Activated naive CD4-positive, alpha-beta T cell treated with anti-CD3 and anti-CD28 coated beads, Interleukin-2, amount 10 ng/mL, durations not matched to agents 7 days and 5 days (primary cell): ENCODE measurements at regions of chr16 and their contacts with region 1.

Region 1: GRCh38 chr16:84687715-84688114 is 12.1 kb upstream of the USP10 start:
- DNase-seq: no peak
- H3K4me3 Mint-ChIP-seq: no peak overlapping the region
- H3K27ac Mint-ChIP-seq: no peak overlapping the region
- H3K4me1 Mint-ChIP-seq: peaks cover 12% of the 10 kb centered on the region
- H3K27me3 Mint-ChIP-seq: peaks cover 68% of the 10 kb centered on the region

Region 2: GRCh38 chr16:84555418-84556195 is 132.1 kb before region 1 on chr16:
- CTCF ChIA-PET with region 1: no interaction called
- DNase-seq: peak; percentile 33
- H3K4me3 Mint-ChIP-seq: no peak overlapping the region
- H3K27ac Mint-ChIP-seq: peak overlapping the region; percentile 78
- H3K4me1 Mint-ChIP-seq: peaks cover 46% of the 10 kb centered on the region
- H3K27me3 Mint-ChIP-seq: no peaks in the 10 kb centered on the region

Region 3: DNA sequence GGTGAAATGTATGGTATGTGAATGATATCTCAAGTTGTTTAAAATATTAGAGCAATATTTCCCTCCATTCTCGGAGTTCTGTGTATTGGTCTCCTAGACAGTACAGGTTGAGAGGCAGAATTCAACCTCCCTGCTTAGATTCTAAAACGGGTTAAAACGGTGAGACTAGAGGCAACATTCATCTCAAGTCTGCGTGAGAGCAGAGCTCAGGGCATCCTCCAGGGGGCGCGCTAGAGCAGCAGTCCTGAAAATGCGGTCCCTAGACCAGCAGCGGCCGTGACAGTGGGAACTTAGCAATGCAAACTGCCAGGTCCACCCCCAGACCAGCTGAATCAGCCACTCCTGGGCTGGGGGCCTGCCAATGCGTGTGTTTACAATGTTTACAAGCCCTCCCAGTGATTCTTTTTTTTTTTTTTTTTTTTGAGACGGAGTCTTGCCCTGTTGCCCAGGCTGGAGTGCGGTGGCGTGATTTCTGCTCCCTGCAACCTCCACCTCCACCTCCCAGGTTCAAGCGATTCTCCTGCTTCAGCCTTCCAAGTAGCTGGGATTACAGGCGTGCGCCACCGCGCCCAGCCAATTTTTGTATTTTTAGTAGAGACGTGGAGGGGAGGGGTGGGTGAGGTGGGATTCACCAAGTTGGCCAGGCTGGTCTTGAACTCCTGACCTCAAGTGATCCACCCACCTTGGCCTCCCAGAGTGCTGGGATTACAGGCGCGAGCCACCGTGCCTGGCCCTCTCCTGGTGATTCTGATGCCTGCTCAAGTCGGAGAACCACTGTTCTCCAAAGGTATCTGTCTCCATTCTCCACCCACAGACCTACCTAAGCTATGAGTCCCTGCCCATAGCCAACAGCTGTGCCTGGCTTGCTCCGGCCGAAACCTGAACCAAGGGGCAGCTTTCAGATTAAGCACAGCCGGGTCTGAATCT is 15.2 kb before region 1 on chr16:
- CTCF ChIA-PET with region 1: interaction called, 12 read pairs
- DNase-seq: peak; percentile 88
- H3K4me3 Mint-ChIP-seq: no peak overlapping the region
- H3K27ac Mint-ChIP-seq: no peak overlapping the region
- H3K4me1 Mint-ChIP-seq: peaks cover 7% of the 10 kb centered on the region
- H3K27me3 Mint-ChIP-seq: peaks cover 30% of the 10 kb centered on the region